HCT116 (cell line): ENCODE measurements at regions of chr6 and their contacts with region 1.

Region 1: GRCh38 chr6:28597217-28598005 is 71.7 kb downstream of the GPX5 start:
- DNase-seq: peak; percentile 83
- ATAC-seq: peak; percentile 86
- H3K4me3 ChIP-seq: peak overlapping the region; percentile 38 to 57
- H3K27ac ChIP-seq: peak overlapping the region; percentile 72
- H3K4me1 ChIP-seq: peaks cover 9 to 31% of the 10 kb centered on the region in 2 experiments; a peak in 3 of 4 replicates
- H3K27me3 ChIP-seq: no peaks in the 10 kb centered on the region
- CTCF ChIP-seq: no peak
- POLR2A ChIP-seq: no peak
- RAD21 ChIP-seq: 0 out of 2 replicates have a peak, but pooled peaks have one; percentile 7

Region 2: GRCh38 chr6:28424153-28424552 is 173.3 kb before region 1 on chr6:
- CTCF ChIA-PET with region 1: no interaction called
- POLR2A ChIA-PET with region 1: no interaction called
- RAD21 ChIA-PET with region 1: no interaction called
- intact Hi-C with region 1: no loop called
- DNase-seq: no peak
- ATAC-seq: no peak; the same call in 1 of the 2 replicates
- H3K4me3 ChIP-seq: no peak overlapping the region
- H3K27ac ChIP-seq: no peak overlapping the region
- H3K4me1 ChIP-seq: peaks cover 0 to 7% of the 10 kb centered on the region in 2 experiments; a peak in 2 of 4 replicates
- H3K27me3 ChIP-seq: no peaks in the 10 kb centered on the region
- CTCF ChIP-seq: no peak
- POLR2A ChIP-seq: no peak
- RAD21 ChIP-seq: no peak

Region 3: DNA sequence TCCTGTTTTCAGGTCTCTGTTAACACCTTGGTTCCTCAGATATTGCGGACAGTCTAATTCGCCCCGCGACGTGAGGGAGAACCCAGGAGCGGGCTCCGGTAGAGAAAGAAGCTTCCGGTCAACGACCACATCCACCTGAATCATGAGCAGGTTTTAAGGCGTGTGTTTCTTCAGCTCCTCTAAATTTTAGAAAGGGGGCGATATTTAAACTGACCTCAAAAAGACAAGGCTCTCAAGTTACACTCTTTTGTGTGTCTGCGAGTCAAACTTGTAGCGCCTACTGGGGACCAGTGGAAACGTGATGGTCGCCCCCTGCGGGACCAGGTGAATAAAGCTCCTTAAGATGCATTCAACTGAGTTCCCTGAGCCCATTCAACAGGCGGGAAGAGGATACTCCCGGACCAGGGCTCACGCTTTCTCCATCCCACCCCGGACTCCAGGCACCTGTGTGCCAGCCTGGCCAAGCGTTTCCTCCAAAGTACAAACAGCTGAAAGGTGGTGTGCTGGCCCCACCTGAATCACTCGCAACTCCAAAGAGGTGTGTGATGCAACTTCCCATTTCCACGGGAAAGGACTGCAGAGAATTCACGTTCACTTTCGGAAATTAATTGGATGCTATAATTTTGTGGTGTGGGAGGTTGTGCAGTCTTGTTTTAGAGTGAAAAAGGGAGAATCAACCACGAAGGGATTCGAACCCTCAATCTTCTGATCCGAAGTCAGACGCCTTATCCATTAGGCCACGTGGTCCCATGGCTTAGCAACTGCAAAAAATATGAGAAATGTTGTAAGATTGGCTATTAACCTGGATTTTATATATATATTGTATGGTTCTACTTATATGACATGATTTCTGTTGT is 54.7 kb before region 1 on chr6:
- CTCF ChIA-PET with region 1: no interaction called
- POLR2A ChIA-PET with region 1: no interaction called
- RAD21 ChIA-PET with region 1: no interaction called
- intact Hi-C with region 1: loop called (anchors 5 kb)
- DNase-seq: peak; percentile 90
- ATAC-seq: peak; percentile 89
- H3K4me3 ChIP-seq: 0 out of 4 replicates have a peak overlapping the region, but pooled peaks of 1 of the 2 experiments have one; percentile 17
- H3K27ac ChIP-seq: peak overlapping the region; percentile 46
- H3K4me1 ChIP-seq: peaks cover 6 to 21% of the 10 kb centered on the region in 2 experiments; a peak in 3 of 4 replicates
- H3K27me3 ChIP-seq: no peaks in the 10 kb centered on the region
- CTCF ChIP-seq: peak; percentile 74 to 85 (median 75)
- POLR2A ChIP-seq: no peak
- RAD21 ChIP-seq: peak; percentile 62